GM12878 (cell line): ENCODE measurements at regions of chrX and their contacts with region 1.

Region 1: GRCh38 chrX:102899940-102900916 is 36.8 kb upstream of the RAB40AL start:
- DNase-seq: peak; percentile 33
- ATAC-seq: peak; percentile 98
- H3K4me3 ChIP-seq: no peak overlapping the region
- H3K27ac ChIP-seq: no peak overlapping the region
- H3K4me1 ChIP-seq: no peaks in the 10 kb centered on the region
- H3K27me3 ChIP-seq: no peaks in the 10 kb centered on the region
- CTCF ChIP-seq: peak; percentile 67 to 78 (median 68)
- EP300 ChIP-seq: no peak
- POLR2A ChIP-seq: no peak
- RAD21 ChIP-seq: peak; percentile 69

Region 2: GRCh38 chrX:102067966-102068708 is 832.1 kb before region 1 on chrX:
- CTCF ChIA-PET with region 1: interaction called, 16 read pairs
- POLR2A ChIA-PET with region 1: no interaction called
- RAD21 ChIA-PET with region 1: interaction called, 7 read pairs
- SMC1A ChIA-PET with region 1: interaction called, 7 read pairs
- in situ Hi-C with region 1: no loop called
- intact Hi-C with region 1: loop called (anchors 5 kb)
- DNase-seq: peak; percentile 1
- ATAC-seq: 0 out of 3 replicates have a peak, but pooled peaks have one; percentile 39
- H3K4me3 ChIP-seq: no peak overlapping the region
- H3K27ac ChIP-seq: no peak overlapping the region
- H3K4me1 ChIP-seq: no peaks in the 10 kb centered on the region
- H3K27me3 ChIP-seq: no peaks in the 10 kb centered on the region
- CTCF ChIP-seq: peak; percentile 51 to 67 (median 58); a peak in 5 of 6 replicates
- EP300 ChIP-seq: no peak
- POLR2A ChIP-seq: no peak
- RAD21 ChIP-seq: peak; percentile 71

Region 3: DNA sequence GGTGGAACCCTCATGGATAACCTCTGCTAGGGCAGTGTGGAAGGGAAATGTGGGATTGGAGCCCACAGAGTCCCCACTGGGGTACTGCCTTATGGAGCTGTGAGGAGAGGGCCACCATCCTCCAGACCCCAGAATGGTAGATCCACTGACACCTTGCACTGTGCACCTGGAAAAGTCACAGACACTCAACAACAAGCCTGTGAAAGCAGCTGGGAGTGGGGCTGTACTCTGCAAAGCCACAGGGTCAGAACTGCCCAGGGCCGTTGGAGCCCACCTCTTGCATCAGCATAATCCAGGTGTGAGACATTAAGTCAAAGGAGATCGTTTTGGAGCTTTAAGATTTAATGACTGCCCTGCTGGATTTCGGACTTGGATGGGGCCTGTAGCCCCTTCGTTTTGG is 289.3 kb before region 1 on chrX:
- CTCF ChIA-PET with region 1: no interaction called
- POLR2A ChIA-PET with region 1: no interaction called
- RAD21 ChIA-PET with region 1: no interaction called
- SMC1A ChIA-PET with region 1: no interaction called
- in situ Hi-C with region 1: no loop called
- intact Hi-C with region 1: no loop called
- DNase-seq: no peak
- ATAC-seq: no peak
- H3K4me3 ChIP-seq: no peak overlapping the region
- H3K27ac ChIP-seq: no peak overlapping the region
- H3K4me1 ChIP-seq: no peaks in the 10 kb centered on the region
- H3K27me3 ChIP-seq: no peaks in the 10 kb centered on the region
- CTCF ChIP-seq: no peak
- EP300 ChIP-seq: no peak
- POLR2A ChIP-seq: no peak
- RAD21 ChIP-seq: no peak

Region 4: DNA sequence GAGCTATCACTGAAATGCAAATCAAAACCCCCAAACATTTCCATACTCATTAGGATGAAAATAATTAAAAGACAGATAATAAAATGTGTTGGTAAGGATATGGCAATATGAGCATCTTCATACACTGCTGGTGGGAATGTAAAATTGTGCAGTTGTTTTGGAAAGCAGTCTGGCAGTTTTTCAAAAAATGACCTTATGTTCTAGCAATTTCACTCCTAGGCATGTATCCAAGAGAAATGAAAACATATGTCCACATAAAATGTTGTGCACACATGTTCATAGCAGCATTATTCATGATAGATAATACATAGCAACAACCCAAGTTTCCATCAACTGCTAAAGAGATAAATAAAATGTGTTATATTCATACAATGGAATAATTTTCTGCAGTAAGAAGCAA is 202.7 kb before region 1 on chrX:
- CTCF ChIA-PET with region 1: no interaction called
- POLR2A ChIA-PET with region 1: no interaction called
- RAD21 ChIA-PET with region 1: no interaction called
- SMC1A ChIA-PET with region 1: no interaction called
- in situ Hi-C with region 1: no loop called
- intact Hi-C with region 1: no loop called
- DNase-seq: no peak
- ATAC-seq: no peak
- H3K4me3 ChIP-seq: no peak overlapping the region
- H3K27ac ChIP-seq: no peak overlapping the region
- H3K4me1 ChIP-seq: no peaks in the 10 kb centered on the region
- H3K27me3 ChIP-seq: no peaks in the 10 kb centered on the region
- CTCF ChIP-seq: no peak
- EP300 ChIP-seq: no peak
- POLR2A ChIP-seq: no peak
- RAD21 ChIP-seq: no peak

Region 5: GRCh38 chrX:102887687-102888086 is 12.5 kb before region 1 on chrX:
- CTCF ChIA-PET with region 1: interaction called, 13 read pairs
- POLR2A ChIA-PET with region 1: no interaction called
- RAD21 ChIA-PET with region 1: no interaction called
- SMC1A ChIA-PET with region 1: interaction called, 3 read pairs
- in situ Hi-C with region 1: no loop called
- intact Hi-C with region 1: no loop called
- DNase-seq: no peak
- ATAC-seq: no peak
- H3K4me3 ChIP-seq: no peak overlapping the region
- H3K27ac ChIP-seq: no peak overlapping the region
- H3K4me1 ChIP-seq: no peaks in the 10 kb centered on the region
- H3K27me3 ChIP-seq: no peaks in the 10 kb centered on the region
- CTCF ChIP-seq: no peak
- EP300 ChIP-seq: no peak
- POLR2A ChIP-seq: no peak
- RAD21 ChIP-seq: no peak